Posterior cingulate gyrus (tissue), 11 donors: ENCODE measurements at regions of chr3 and their contacts with region 1.

Region 1: DNA sequence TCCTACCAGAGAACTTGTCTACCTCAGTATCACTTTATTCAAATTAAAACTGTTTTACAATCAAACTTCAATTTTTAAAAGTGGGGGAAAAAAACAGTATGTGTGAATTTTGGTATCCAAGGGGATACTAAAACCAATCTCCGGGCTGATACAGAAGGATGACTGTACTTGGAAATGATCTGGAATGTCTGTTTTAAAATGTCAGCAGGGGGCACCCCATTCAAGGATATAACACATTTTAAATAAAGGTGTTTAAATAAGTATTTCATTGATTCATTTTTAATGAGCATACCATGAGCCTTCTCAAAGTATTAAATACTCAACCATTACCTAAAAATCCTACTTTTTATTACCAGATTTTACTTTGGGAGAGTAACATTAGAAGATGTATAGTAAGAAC is 67.9 kb downstream of the ULK4 start:
- DNase-seq: no peak

Region 2: DNA sequence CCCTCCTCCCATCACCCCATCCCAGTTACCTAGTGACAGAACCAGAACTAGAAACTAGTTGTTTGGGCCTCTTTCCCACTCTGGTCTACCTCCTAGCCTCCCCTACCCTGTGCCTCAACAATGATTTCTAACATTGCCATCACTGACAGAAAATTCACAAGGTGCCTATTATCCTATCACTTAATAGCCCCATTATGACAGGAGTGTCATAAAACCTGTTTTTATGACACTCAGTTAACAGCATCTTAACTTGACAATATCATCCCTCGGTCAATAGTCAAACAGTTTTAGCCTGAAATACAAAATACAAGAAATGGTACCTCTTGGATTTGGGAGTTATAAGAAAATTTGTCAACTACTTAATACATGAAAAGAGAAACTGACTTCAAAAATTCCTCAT is 21.4 kb after region 1 on chr3:
- intact Hi-C with region 1: no loop called
- DNase-seq: no peak

Region 3: DNA sequence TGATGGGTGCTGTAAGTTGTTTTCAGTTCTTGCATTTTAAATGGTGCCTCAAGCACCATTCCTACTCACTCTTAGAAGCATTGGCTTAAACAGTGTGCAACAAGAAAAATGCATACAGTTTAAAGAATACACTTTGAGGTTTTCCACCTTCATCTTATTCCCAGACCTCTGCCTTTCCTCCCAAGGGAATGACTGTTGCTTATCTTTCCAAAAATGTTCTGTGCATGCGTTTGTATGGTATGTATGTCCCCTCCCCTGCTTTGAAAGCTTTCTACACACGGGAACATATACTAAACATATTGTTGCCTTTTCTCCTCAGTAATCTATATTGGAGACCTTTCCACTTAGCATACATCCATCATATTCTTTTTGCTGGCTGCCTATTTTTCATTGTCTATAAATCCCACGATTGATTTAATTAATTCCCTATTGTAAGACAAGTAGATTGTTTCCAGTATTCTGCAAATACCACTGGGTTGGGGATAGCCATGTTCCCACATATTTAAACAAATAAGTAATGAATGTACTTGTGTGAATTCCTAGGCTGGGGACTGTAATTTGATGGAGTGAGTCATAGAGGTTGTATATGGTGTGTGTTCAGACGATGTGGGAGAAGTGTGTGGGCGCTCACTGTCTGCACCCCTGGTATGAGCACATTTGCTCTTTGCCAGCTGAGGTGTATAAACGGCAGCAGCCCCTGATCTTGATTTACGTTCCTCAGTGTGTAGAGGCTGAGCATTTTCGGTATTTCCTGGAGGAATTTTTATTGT is 203.0 kb after region 1 on chr3:
- intact Hi-C with region 1: loop called (anchors 1 kb)
- DNase-seq: no peak